Gastrocnemius medialis (tissue), 4 donors: ENCODE measurements at regions of chr22 and their contacts with region 1.

Region 1: GRCh38 chr22:28800308-28801077 is at the start of gene XBP1:
- DNase-seq: peak; percentile 92 to 94
- ATAC-seq: peak; percentile 82 to 85
- H3K4me3 ChIP-seq: peak within 1 kb of the TSS; percentile 84 to 90 (median 86)
- H3K27ac ChIP-seq: peak within 1 kb of the TSS; percentile 97 to 99 (median 98)
- H3K4me1 ChIP-seq: peaks cover 36 to 41% of the 10 kb centered on the region in 2 donors
- H3K27me3 ChIP-seq: no peaks in the 10 kb centered on the region
- CTCF ChIP-seq: no peak
- POLR2A ChIP-seq: peak; percentile 100
- total RNA-seq, gene XBP1: 66.0 to 403 (median 115) TPM

Region 2: DNA sequence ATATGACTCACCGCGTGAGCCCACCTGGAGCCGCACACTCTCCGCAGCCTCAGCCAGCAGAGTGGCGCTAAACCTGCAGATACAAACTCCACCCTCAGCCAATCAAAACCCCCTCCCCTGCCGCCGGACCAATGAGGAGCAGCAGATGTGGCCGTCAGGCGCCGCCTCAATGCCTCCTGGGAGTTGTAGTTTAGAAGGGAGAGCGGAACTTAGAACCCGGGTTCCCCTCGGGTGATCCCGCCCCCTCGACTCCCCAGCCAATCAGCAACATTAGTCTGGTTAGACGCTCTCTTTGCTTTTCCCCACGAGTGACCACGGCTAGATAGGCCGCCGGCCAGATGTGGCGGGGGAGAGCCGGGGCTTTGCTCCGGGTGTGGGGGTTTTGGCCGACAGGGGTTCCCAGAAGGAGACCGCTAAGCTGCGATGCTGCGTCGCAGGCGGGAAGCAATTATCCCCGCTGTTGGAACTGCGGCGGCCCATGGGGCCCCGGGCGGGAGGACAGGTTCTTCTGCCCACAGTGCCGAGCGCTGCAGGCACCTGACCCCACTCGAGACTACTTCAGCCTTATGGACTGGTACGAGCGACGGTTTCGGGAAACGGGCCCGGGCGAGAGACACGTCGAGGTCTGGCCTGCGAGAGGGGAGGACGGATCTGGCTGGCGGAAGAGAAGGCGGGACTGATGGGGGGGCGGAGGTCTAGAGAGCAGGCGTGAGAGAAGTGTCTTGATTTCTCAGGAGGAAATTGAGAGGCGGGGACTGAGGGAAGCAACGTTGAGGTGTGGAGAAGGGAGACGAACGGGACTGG is 58.5 kb before region 1 on chr22 and contains the starts of genes CHEK2 and HSCB:
- in situ Hi-C with region 1: no loop called
- intact Hi-C with region 1: loop called (anchors 1 kb)
- DNase-seq: peak; percentile 98
- ATAC-seq: peak; percentile 99
- H3K4me3 ChIP-seq: peak within 1 kb of the TSS; percentile 62 to 98 (median 82)
- H3K27ac ChIP-seq: peak within 1 kb of the TSS; percentile 90 to 99 (median 94)
- H3K4me1 ChIP-seq: peaks cover 12 to 13% of the 10 kb centered on the region in 2 donors
- H3K27me3 ChIP-seq: no peaks in the 10 kb centered on the region
- CTCF ChIP-seq: peak in 1 of 5 experiments; percentile 15
- POLR2A ChIP-seq: peak; percentile 64 to 75
- total RNA-seq, gene CHEK2: 0.58 to 5.7 (median 3.7) TPM
- total RNA-seq, gene HSCB: 14.4 to 30.4 (median 22.9) TPM

Region 3: DNA sequence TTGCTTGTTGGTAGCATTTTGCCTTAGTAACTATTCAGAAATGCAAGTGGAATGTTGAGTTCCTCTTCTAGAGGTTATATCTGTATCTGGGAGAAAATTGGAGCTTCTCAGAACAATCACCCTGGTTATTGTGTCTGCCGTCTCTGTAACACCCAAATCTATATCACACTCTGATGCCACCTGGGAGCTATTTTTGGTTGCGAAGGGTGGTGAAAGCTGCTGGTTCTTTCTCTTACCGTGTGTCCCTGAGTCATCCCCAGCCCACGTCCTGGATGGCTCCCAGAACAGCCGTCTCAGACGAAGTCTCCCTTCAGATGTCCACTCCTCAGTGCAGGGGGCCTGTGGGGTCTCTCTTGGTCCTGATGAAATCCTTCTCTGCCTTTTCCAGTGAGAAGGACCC is 177.7 kb after region 1 on chr22:
- in situ Hi-C with region 1: no loop called
- intact Hi-C with region 1: loop called (anchors 2 kb)
- DNase-seq: peak; percentile 80 to 91
- ATAC-seq: peak; percentile 83 to 85
- H3K4me3 ChIP-seq: peak overlapping the region; percentile 36 to 45 (median 42)
- H3K27ac ChIP-seq: peak overlapping the region; percentile 84 to 94 (median 92)
- H3K4me1 ChIP-seq: peaks cover 47 to 59% of the 10 kb centered on the region in 2 donors
- H3K27me3 ChIP-seq: no peaks in the 10 kb centered on the region
- CTCF ChIP-seq: no peak
- POLR2A ChIP-seq: peak; percentile 65 to 78

Region 4: GRCh38 chr22:29202212-29203192 is 402.0 kb after region 1 on chr22:
- in situ Hi-C with region 1: no loop called
- intact Hi-C with region 1: no loop called
- DNase-seq: peak in 1 of 2 donors; percentile 41
- ATAC-seq: peak; percentile 25 to 37
- H3K4me3 ChIP-seq: no peak overlapping the region
- H3K27ac ChIP-seq: peak overlapping the region; percentile 12 to 53 (median 14)
- H3K4me1 ChIP-seq: peaks cover 0 to 4% of the 10 kb centered on the region in 2 donors
- H3K27me3 ChIP-seq: peaks cover 7 to 11% (median 7%) of the 10 kb centered on the region in 3 donors
- CTCF ChIP-seq: peak in 3 of 5 experiments; percentile 18 to 39 (median 26)
- POLR2A ChIP-seq: no peak

Region 5: GRCh38 chr22:29603358-29604075 is 803.0 kb after region 1 on chr22 and contains the start of gene NF2:
- in situ Hi-C with region 1: no loop called
- intact Hi-C with region 1: loop called (anchors 5 kb)
- DNase-seq: peak; percentile 98 to 99
- ATAC-seq: peak; percentile 99 to 100
- H3K4me3 ChIP-seq: peak within 1 kb of the TSS; percentile 94 to 99 (median 96)
- H3K27ac ChIP-seq: peak within 1 kb of the TSS; percentile 97 to 99 (median 98)
- H3K4me1 ChIP-seq: peaks cover 11 to 16% of the 10 kb centered on the region in 2 donors
- H3K27me3 ChIP-seq: no peaks in the 10 kb centered on the region
- CTCF ChIP-seq: peak in 1 of 5 experiments; percentile 8
- POLR2A ChIP-seq: peak; percentile 60 to 71
- total RNA-seq, gene NF2: 34.7 to 66.3 (median 48.2) TPM